Uterus (tissue), 4 donors: ENCODE measurements at regions of chr2 and their contacts with region 1.

Region 1: DNA sequence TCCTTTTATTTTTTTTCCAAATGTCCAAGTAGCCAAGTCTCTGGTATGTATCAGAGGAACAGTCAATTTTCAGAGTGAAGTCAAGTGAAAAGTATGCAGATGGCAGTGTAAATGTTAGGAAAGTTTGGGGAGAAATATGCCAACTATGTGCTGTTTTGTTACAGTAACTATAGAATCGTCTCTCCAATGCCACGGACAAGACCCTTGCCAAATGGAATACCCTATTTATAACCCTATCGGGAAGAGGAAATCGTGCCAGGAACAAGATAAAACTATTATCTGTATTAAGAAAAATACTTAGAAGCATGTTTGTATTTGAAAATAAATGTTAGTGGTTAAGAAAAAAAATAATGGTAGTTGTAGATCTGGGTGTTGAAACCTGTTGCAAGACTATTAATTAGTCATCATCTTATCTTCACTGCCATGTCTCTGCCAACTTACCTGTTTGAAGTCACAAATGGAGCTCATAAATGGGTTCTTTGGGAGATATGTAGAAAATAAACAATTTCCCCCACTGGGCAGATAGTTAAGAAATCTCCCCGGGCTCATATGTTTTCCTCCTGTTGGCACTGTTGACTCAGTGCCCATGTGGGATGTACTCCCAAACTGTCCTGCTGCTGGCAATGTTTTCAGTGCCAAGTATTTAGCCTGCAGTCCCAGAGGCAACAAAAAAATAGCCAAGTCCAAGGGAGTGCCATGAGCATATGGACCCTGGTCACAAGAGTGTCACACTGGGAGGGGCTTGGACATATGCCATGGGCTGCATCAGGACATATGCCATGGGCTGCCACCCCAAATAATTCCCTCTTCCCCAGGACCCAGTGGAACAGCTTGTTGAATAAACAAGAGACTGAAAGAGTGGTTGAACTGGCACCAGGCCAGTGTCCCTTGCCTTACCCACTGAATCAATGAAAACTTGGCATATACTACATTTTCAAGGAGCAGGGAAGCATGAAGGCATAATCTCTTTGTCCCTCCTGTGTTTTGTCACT is 366.9 kb downstream of the OSR1 start:
- DNase-seq: peak; percentile 23 to 29
- H3K4me3 ChIP-seq: no peak overlapping the region
- H3K27ac ChIP-seq: no peak overlapping the region
- H3K4me1 ChIP-seq: no peaks in the 10 kb centered on the region
- H3K27me3 ChIP-seq: no peaks in the 10 kb centered on the region
- CTCF ChIP-seq: no peak
- POLR2A ChIP-seq: no peak

Region 2: GRCh38 chr2:18440141-18440661 is 551.3 kb before region 1 on chr2:
- intact Hi-C with region 1: no loop called
- DNase-seq: peak; percentile 51 to 81
- H3K4me3 ChIP-seq: no peak overlapping the region
- H3K27ac ChIP-seq: peak overlapping the region in 1 of 2 donors; percentile 33
- H3K4me1 ChIP-seq: peaks cover 0 to 21% of the 10 kb centered on the region in 2 donors
- H3K27me3 ChIP-seq: no peaks in the 10 kb centered on the region
- CTCF ChIP-seq: no peak
- POLR2A ChIP-seq: no peak

Region 3: DNA sequence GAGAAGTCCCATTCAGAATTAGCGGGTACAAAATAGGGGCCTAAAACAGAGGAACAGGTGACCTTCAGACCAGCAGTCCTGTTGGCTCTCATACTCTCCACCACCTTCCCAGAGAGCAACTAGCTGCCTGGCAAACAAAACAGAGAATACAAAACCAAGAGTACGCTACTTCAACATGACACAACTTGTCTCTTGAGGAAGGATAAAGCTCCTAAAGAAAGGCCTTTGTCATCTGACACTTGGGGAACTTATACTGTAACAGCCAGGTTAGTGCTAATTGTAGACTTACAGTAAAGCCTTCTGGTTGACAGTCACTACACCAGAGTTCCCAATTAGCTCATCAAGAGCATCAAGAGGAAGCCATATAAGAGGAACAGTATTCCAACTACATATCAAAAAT is 120.0 kb before region 1 on chr2:
- intact Hi-C with region 1: no loop called
- DNase-seq: no peak
- H3K4me3 ChIP-seq: no peak overlapping the region
- H3K27ac ChIP-seq: no peak overlapping the region
- H3K4me1 ChIP-seq: no peaks in the 10 kb centered on the region
- H3K27me3 ChIP-seq: no peaks in the 10 kb centered on the region
- CTCF ChIP-seq: no peak
- POLR2A ChIP-seq: no peak

Region 4: GRCh38 chr2:19349911-19350677 is 358.6 kb after region 1 on chr2:
- intact Hi-C with region 1: loop called (anchors 10 kb)
- DNase-seq: no peak
- H3K4me3 ChIP-seq: no peak overlapping the region
- H3K27ac ChIP-seq: no peak overlapping the region
- H3K4me1 ChIP-seq: peaks cover 0 to 4% of the 10 kb centered on the region in 2 donors
- H3K27me3 ChIP-seq: no peaks in the 10 kb centered on the region
- CTCF ChIP-seq: peak; percentile 11 to 39 (median 26)
- POLR2A ChIP-seq: no peak